Upper lobe of right lung (tissue), 1 donor: ENCODE measurements at regions of chr11 and their contacts with region 1.

Region 1: GRCh38 chr11:119728651-119729580 is at the start of gene NECTIN1:
- DNase-seq: peak; percentile 94
- ATAC-seq: peak; percentile 92
- H3K4me3 ChIP-seq: peak within 1 kb of the TSS; percentile 83
- H3K27ac ChIP-seq: peak within 1 kb of the TSS; percentile 63
- H3K4me1 ChIP-seq: peaks cover 25% of the 10 kb centered on the region
- H3K27me3 ChIP-seq: no peaks in the 10 kb centered on the region
- CTCF ChIP-seq: peak; percentile 96
- total RNA-seq, gene NECTIN1: 10.4 TPM

Region 2: GRCh38 chr11:119663279-119663678 is 65.6 kb before region 1 on chr11:
- intact Hi-C with region 1: no loop called
- DNase-seq: no peak
- ATAC-seq: no peak
- H3K4me3 ChIP-seq: no peak overlapping the region
- H3K27ac ChIP-seq: no peak overlapping the region
- H3K4me1 ChIP-seq: no peaks in the 10 kb centered on the region
- H3K27me3 ChIP-seq: no peaks in the 10 kb centered on the region
- CTCF ChIP-seq: no peak

Region 3: DNA sequence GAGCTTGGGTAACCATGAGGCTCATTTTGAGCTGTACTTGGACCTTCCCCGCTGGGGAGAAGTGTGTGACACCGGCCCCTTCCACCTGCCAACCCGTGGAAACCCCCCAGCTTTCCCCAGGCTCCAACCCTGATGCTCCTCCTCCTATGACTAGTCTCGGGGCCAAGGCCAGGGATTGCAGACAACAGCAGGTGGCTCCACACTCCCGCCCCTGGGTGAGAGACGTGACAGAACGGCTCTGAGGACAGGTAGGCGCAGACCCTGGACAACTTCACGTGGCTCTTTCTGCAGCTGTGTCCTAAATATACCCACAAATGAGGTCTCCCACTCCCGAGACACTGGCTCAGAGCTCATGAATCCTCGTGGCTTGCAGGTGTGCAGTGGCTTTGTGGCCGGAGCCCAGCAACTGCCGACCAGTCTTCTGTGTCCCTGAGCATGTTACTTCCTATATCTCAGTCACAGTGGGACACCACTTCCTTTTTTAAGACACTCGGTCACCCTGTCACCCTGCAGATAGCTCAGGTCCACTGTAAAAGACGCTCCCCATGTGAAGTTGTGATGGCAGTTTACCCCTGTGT is 55.1 kb before region 1 on chr11:
- intact Hi-C with region 1: loop called (anchors 10 kb)
- DNase-seq: no peak
- ATAC-seq: peak; percentile 58
- H3K4me3 ChIP-seq: no peak overlapping the region
- H3K27ac ChIP-seq: no peak overlapping the region
- H3K4me1 ChIP-seq: peaks cover 15% of the 10 kb centered on the region
- H3K27me3 ChIP-seq: no peaks in the 10 kb centered on the region
- CTCF ChIP-seq: no peak

Region 4: DNA sequence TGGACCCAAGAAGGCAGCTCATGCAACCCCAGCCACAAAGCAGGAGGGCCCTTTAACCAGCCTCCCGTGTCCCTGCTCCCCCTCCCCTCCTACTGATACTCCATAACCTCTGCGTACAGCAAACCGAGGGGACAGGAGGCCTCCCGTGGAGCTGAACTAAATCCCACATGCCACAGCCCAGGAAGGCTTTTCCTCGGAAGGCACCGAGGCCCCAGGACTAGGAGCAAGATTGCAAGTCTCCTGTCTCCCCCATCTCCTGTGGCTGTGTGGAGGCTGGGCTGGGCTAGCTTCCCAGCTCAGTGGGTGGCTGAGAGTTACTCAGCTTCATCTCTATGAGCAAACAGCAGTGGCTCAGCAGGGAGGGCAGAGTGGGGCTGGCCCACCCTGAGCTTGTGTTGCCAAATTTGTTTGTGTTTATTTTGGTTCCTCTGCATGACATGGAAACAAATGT is 62.8 kb after region 1 on chr11:
- intact Hi-C with region 1: no loop called
- DNase-seq: peak; percentile 44
- ATAC-seq: no peak
- H3K4me3 ChIP-seq: no peak overlapping the region
- H3K27ac ChIP-seq: no peak overlapping the region
- H3K4me1 ChIP-seq: no peaks in the 10 kb centered on the region
- H3K27me3 ChIP-seq: peaks cover 8% of the 10 kb centered on the region
- CTCF ChIP-seq: no peak